ENCODE measurements at regions of chr15 and their contacts with region 1.

Region 1: GRCh38 chr15:29925227-29926082 is 103.2 kb upstream of the TJP1 start:
- DNase-seq: peak; percentile 78
- ATAC-seq: peak; percentile 93 to 94

Region 2: GRCh38 chr15:29711531-29711930 is 213.9 kb before region 1 on chr15:
- intact Hi-C with region 1: loop called in 1 of 2 experiments (anchors 5 kb)
- DNase-seq: no peak
- ATAC-seq: no peak

Region 3: GRCh38 chr15:29747837-29748417 is 177.5 kb before region 1 on chr15:
- intact Hi-C with region 1: loop called (anchors 2 to 10 kb)
- DNase-seq: no peak
- ATAC-seq: no peak

Region 4: GRCh38 chr15:29815000-29815710 is 110.3 kb before region 1 on chr15:
- intact Hi-C with region 1: loop called (anchors 5 to 10 kb)
- DNase-seq: no peak
- ATAC-seq: peak in 1 of 2 donors; percentile 80

Region 5: DNA sequence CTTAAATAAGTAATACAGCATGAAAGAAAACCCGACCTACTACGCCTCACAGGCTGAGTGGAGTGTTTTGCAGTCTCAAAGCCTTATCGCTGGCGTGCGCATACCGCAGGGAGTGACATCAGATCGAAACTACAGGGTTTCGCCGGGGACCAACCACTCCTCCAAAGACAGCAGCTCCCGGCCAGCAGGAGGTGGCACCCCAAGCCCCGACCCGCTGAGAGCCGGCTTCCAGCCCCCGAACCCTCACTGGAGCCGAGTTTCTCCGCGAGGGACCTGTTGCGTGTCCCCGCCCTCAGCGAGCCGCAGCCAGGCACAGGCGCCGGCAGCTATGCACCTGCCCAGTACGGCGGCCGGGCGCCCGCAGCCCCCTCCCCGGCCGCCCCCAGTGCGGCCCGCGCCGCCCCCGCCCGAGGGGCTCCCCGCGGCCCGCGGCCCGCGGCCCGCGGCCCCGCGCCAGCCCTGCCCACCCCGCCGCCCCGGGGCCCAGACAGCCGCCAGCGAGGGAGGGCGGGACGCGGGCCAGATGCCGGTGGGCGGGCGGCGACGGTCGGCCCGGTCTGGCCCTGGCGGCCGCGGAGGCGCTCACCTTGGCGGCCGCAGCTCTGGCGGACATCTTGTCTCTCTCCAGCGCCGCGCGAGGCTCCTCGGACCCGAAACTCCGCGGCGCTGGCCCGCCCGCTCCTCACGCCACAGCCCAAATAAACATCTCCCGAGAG is 103.9 kb before region 1 on chr15:
- intact Hi-C with region 1: loop called (anchors 5 to 10 kb)
- DNase-seq: peak; percentile 82
- ATAC-seq: peak; percentile 32 to 50

Region 6: GRCh38 chr15:29883126-29883525 is 42.3 kb before region 1 on chr15:
- intact Hi-C with region 1: no loop called
- DNase-seq: no peak
- ATAC-seq: peak in 1 of 2 donors; percentile 59

Region 7: GRCh38 chr15:29962407-29962806 is 37.0 kb after region 1 on chr15:
- intact Hi-C with region 1: no loop called
- DNase-seq: no peak
- ATAC-seq: no peak